Caco-2 (cell line): ENCODE measurements at regions of chr11 and their contacts with region 1.

Region 1: GRCh38 chr11:65366340-65366773 is 11.8 kb downstream of the TIGD3 start:
- DNase-seq: peak; percentile 78
- H3K4me3 ChIP-seq: no peak overlapping the region
- H3K4me3 Mint-ChIP-seq: no peak overlapping the region
- H3K27ac Mint-ChIP-seq: no peak overlapping the region
- H3K4me1 ChIP-seq: peaks cover 31% of the 10 kb centered on the region
- H3K4me1 Mint-ChIP-seq: peaks cover 27% of the 10 kb centered on the region
- H3K27me3 ChIP-seq: no peaks in the 10 kb centered on the region
- H3K27me3 Mint-ChIP-seq: no peaks in the 10 kb centered on the region
- CTCF ChIP-seq: peak; percentile 66 to 85

Region 2: DNA sequence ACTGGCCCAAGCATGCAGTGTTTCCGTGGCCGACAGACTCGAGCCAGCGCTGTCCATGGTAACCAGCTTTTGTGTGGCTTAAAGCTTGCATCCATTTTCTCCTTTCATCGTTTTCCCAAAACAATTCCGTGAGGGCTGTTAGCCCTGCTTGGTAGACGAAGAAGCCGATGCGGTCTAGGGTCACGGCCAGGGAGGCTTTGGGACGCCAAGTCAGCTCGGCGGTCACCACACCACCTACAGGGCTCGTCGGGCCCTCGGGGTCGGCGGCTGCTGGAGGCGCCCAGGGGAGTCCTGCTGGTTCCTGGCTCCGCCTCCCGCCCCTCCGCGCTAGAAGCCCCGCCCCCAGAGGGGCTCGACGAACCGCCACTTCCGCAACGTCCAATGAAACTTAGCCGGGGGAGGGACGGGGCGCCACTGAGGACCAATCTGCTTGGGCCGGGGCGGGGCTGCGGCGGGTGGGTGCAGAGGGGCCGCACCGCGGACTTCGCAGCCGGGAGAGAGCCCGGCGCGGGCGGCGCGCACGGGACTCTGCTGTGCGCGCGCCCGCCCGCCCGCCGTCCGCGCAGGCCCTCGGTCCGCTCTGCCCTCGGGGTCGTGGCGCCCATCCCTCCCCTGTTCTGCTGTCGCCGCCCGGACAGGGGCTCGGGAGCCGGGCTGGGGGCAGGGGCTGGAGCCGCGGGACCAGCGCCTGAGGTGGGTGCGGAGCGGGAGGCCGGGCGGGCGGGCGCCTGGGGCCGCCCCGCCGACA is 11.9 kb before region 1 on chr11 and contains the start of gene TIGD3:
- CTCF ChIA-PET with region 1: interaction called, 7 read pairs
- POLR2A ChIA-PET with region 1: interaction called, 5 read pairs
- intact Hi-C with region 1: loop called (anchors 1 kb)
- DNase-seq: peak; percentile 98 to 99
- H3K4me3 ChIP-seq: peak within 1 kb of the TSS; percentile 62
- H3K4me3 Mint-ChIP-seq: peak within 1 kb of the TSS; percentile 94
- H3K27ac Mint-ChIP-seq: peak within 1 kb of the TSS; percentile 87
- H3K4me1 ChIP-seq: peaks cover 28% of the 10 kb centered on the region
- H3K4me1 Mint-ChIP-seq: peaks cover 38% of the 10 kb centered on the region
- H3K27me3 ChIP-seq: no peaks in the 10 kb centered on the region
- H3K27me3 Mint-ChIP-seq: no peaks in the 10 kb centered on the region
- CTCF ChIP-seq: no peak
- total RNA-seq, gene TIGD3: 3.0 and 3.2 TPM in 2 replicates

Region 3: GRCh38 chr11:65382033-65382807 is 15.9 kb after region 1 on chr11 and contains the start of gene SLC25A45:
- CTCF ChIA-PET with region 1: interaction called, 23 read pairs
- POLR2A ChIA-PET with region 1: interaction called, 8 read pairs
- intact Hi-C with region 1: loop called (anchors 1 kb)
- DNase-seq: peak; percentile 93 to 94
- H3K4me3 ChIP-seq: peak within 1 kb of the TSS; percentile 39
- H3K4me3 Mint-ChIP-seq: peak within 1 kb of the TSS; percentile 69
- H3K27ac Mint-ChIP-seq: peak within 1 kb of the TSS; percentile 90
- H3K4me1 ChIP-seq: peaks cover 56% of the 10 kb centered on the region
- H3K4me1 Mint-ChIP-seq: peaks cover 28% of the 10 kb centered on the region
- H3K27me3 ChIP-seq: no peaks in the 10 kb centered on the region
- H3K27me3 Mint-ChIP-seq: no peaks in the 10 kb centered on the region
- CTCF ChIP-seq: peak; percentile 76 to 94
- total RNA-seq, gene SLC25A45: 8.1 and 8.5 TPM in 2 replicates

Region 4: GRCh38 chr11:65432686-65433582 is 66.6 kb after region 1 on chr11:
- CTCF ChIA-PET with region 1: no interaction called
- POLR2A ChIA-PET with region 1: no interaction called
- intact Hi-C with region 1: loop called (anchors 1 kb)
- DNase-seq: no peak
- H3K4me3 ChIP-seq: no peak overlapping the region
- H3K4me3 Mint-ChIP-seq: no peak overlapping the region
- H3K27ac Mint-ChIP-seq: no peak overlapping the region
- H3K4me1 ChIP-seq: no peaks in the 10 kb centered on the region
- H3K4me1 Mint-ChIP-seq: peaks cover 48% of the 10 kb centered on the region
- H3K27me3 ChIP-seq: no peaks in the 10 kb centered on the region
- H3K27me3 Mint-ChIP-seq: no peaks in the 10 kb centered on the region
- CTCF ChIP-seq: peak; percentile 35 to 49

Region 5: GRCh38 chr11:65471410-65471762 is 105.0 kb after region 1 on chr11:
- CTCF ChIA-PET with region 1: interaction called, 3 read pairs
- POLR2A ChIA-PET with region 1: interaction called, 5 read pairs
- intact Hi-C with region 1: loop called (anchors 1 kb)
- DNase-seq: peak; percentile 83 to 85
- H3K4me3 ChIP-seq: no peak overlapping the region
- H3K4me3 Mint-ChIP-seq: peak overlapping the region; percentile 56
- H3K27ac Mint-ChIP-seq: peak overlapping the region; percentile 96
- H3K4me1 ChIP-seq: peaks cover 35% of the 10 kb centered on the region
- H3K4me1 Mint-ChIP-seq: peaks cover 7% of the 10 kb centered on the region
- H3K27me3 ChIP-seq: no peaks in the 10 kb centered on the region
- H3K27me3 Mint-ChIP-seq: no peaks in the 10 kb centered on the region
- CTCF ChIP-seq: peak; percentile 72 to 81

Region 6: GRCh38 chr11:65497141-65498041 is 131.0 kb after region 1 on chr11:
- CTCF ChIA-PET with region 1: interaction called, 3 read pairs
- POLR2A ChIA-PET with region 1: interaction called, 10 read pairs
- intact Hi-C with region 1: no loop called
- DNase-seq: peak; percentile 99
- H3K4me3 ChIP-seq: peak overlapping the region; percentile 81
- H3K4me3 Mint-ChIP-seq: no peak overlapping the region
- H3K27ac Mint-ChIP-seq: no peak overlapping the region
- H3K4me1 ChIP-seq: peaks cover 37% of the 10 kb centered on the region
- H3K4me1 Mint-ChIP-seq: peaks cover 35% of the 10 kb centered on the region
- H3K27me3 ChIP-seq: no peaks in the 10 kb centered on the region
- H3K27me3 Mint-ChIP-seq: peaks cover 3% of the 10 kb centered on the region
- CTCF ChIP-seq: peak in 1 of 2 experiments; percentile 17

Region 7: GRCh38 chr11:65506770-65507505 is 140.6 kb after region 1 on chr11:
- CTCF ChIA-PET with region 1: interaction called, 8 read pairs
- POLR2A ChIA-PET with region 1: interaction called, 8 read pairs
- intact Hi-C with region 1: loop called (anchors 1 kb)
- DNase-seq: peak; percentile 72 to 89
- H3K4me3 ChIP-seq: no peak overlapping the region
- H3K4me3 Mint-ChIP-seq: no peak overlapping the region
- H3K27ac Mint-ChIP-seq: no peak overlapping the region
- H3K4me1 ChIP-seq: peaks cover 34% of the 10 kb centered on the region
- H3K4me1 Mint-ChIP-seq: peaks cover 62% of the 10 kb centered on the region
- H3K27me3 ChIP-seq: no peaks in the 10 kb centered on the region
- H3K27me3 Mint-ChIP-seq: peaks cover 2% of the 10 kb centered on the region
- CTCF ChIP-seq: no peak